Naive thymus-derived CD4-positive, alpha-beta T cell (primary cell): ENCODE measurements at regions of chr5 and their contacts with region 1.

Region 1: GRCh38 chr5:137629646-137630045 is 106.2 kb downstream of the KLHL3 start:
- DNase-seq: peak in 7 of 9 donors; percentile 26 to 61 (median 52)
- ATAC-seq: peak; percentile 82
- H3K4me3 ChIP-seq: no peak overlapping the region
- H3K4me3 Mint-ChIP-seq: no peak overlapping the region
- H3K27ac ChIP-seq: no peak overlapping the region
- H3K27ac Mint-ChIP-seq: no peak overlapping the region
- H3K4me1 ChIP-seq: no peaks in the 10 kb centered on the region
- H3K4me1 Mint-ChIP-seq: peaks cover 0 to 2% (median 0%) of the 10 kb centered on the region in 7 donors
- H3K27me3 ChIP-seq: no peaks in the 10 kb centered on the region
- H3K27me3 Mint-ChIP-seq: no peaks in the 10 kb centered on the region

Region 2: DNA sequence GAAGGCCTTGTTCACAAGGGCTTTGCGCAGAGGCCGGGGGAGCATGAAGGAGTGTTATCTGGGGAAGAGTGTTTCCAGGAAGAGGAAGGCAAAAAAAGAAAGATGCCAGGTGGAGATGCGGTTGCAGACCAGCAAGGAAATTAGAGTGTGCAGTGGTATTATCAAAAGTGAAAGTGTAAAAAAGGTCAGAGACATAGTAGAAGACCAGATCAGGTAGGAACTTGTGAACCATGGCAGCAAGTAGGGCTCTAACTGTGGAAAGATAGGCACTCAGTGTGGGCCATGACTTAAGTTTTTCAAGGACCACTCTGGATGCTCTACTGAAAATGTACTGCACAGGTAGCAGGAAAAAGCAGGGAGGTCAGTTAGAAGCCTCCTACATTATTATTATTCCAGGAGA is 40.5 kb before region 1 on chr5:
- CTCF ChIA-PET with region 1: no interaction called
- POLR2A ChIA-PET with region 1: no interaction called
- intact Hi-C with region 1: no loop called
- DNase-seq: no peak
- ATAC-seq: no peak
- H3K4me3 ChIP-seq: no peak overlapping the region
- H3K4me3 Mint-ChIP-seq: peak overlapping the region in 1 of 10 donors; percentile 24
- H3K27ac ChIP-seq: no peak overlapping the region
- H3K27ac Mint-ChIP-seq: no peak overlapping the region
- H3K4me1 ChIP-seq: no peaks in the 10 kb centered on the region
- H3K4me1 Mint-ChIP-seq: peaks cover 0 to 6% (median 4%) of the 10 kb centered on the region in 7 donors
- H3K27me3 ChIP-seq: no peaks in the 10 kb centered on the region
- H3K27me3 Mint-ChIP-seq: peaks cover 24 to 46% (median 27%) of the 10 kb centered on the region in 5 donors

Region 3: DNA sequence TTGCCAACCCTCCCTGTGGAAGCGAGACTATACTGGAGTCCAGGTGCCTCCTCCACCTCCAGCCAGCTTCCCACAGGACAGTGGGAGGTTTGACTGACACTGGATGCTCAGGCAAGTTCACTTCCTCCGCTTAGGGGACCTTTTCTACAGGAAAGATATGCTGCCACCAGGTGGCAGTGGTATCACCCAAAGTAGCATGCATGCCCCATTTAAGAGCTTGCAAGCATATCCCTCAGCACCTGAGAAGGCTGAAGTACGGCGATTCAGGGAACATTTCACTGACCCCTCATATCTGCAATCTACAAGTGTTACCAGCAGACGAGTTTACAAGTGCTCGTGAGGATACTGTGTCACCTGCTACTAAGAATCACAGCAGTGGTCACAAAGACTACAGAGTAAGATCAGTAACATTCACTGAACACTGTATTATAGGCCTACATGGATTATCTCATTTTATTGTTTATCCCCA is 30.7 kb after region 1 on chr5:
- CTCF ChIA-PET with region 1: interaction called, 19 read pairs
- POLR2A ChIA-PET with region 1: no interaction called
- intact Hi-C with region 1: loop called (anchors 1 kb)
- DNase-seq: peak; percentile 32 to 78 (median 70)
- ATAC-seq: peak; percentile 91
- H3K4me3 ChIP-seq: no peak overlapping the region
- H3K4me3 Mint-ChIP-seq: no peak overlapping the region
- H3K27ac ChIP-seq: no peak overlapping the region
- H3K27ac Mint-ChIP-seq: peak overlapping the region in 4 of 9 donors; percentile 27 to 45 (median 36)
- H3K4me1 ChIP-seq: peaks cover 0 to 4% of the 10 kb centered on the region in 2 donors
- H3K4me1 Mint-ChIP-seq: peaks cover 0 to 17% (median 14%) of the 10 kb centered on the region in 7 donors
- H3K27me3 ChIP-seq: no peaks in the 10 kb centered on the region
- H3K27me3 Mint-ChIP-seq: no peaks in the 10 kb centered on the region

Region 4: DNA sequence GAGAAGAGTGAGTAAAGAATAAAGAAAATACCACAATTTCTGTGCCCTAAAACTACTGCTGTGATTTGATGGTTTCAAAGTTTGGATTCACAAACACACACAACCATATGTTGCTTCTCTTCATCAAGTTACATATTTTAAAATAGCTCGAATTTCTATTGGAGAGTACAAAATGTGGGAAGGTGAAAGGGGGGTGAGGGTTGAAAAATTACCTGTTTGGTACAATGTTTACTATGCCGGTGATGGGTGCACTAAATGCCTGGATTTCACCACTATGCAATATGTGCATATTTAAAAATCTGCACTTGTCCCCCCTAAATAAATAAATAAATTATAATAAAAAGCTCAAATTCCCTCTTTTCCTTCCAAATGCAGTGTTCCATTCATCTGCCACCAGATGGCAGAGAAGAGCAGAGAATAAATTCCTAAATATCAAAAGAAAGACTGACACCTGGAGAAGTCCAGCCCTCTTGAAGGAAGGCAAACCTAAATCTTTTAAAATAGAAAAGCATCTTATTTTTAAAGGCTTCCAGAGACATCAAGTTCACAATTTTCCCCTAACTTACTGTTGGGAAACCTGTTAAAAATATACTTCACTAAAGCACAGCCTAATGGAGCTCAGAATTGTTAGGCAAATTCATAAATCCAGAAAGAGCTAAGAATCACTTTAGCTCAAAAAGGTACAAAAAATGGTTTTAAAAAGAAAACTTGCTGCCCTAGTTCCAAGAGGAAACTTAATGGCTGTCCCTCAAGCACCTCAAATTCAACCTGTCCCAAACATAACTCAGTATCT is 149.3 kb after region 1 on chr5:
- CTCF ChIA-PET with region 1: no interaction called
- POLR2A ChIA-PET with region 1: no interaction called
- intact Hi-C with region 1: loop called in 1 of 2 experiments (anchors 1 kb)
- DNase-seq: peak in 5 of 9 donors; percentile 11 to 29 (median 16)
- ATAC-seq: no peak
- H3K4me3 ChIP-seq: no peak overlapping the region
- H3K4me3 Mint-ChIP-seq: no peak overlapping the region
- H3K27ac ChIP-seq: no peak overlapping the region
- H3K27ac Mint-ChIP-seq: no peak overlapping the region
- H3K4me1 ChIP-seq: no peaks in the 10 kb centered on the region
- H3K4me1 Mint-ChIP-seq: no peaks in the 10 kb centered on the region
- H3K27me3 ChIP-seq: no peaks in the 10 kb centered on the region
- H3K27me3 Mint-ChIP-seq: peaks cover 0 to 12% (median 0%) of the 10 kb centered on the region in 5 donors

Region 5: DNA sequence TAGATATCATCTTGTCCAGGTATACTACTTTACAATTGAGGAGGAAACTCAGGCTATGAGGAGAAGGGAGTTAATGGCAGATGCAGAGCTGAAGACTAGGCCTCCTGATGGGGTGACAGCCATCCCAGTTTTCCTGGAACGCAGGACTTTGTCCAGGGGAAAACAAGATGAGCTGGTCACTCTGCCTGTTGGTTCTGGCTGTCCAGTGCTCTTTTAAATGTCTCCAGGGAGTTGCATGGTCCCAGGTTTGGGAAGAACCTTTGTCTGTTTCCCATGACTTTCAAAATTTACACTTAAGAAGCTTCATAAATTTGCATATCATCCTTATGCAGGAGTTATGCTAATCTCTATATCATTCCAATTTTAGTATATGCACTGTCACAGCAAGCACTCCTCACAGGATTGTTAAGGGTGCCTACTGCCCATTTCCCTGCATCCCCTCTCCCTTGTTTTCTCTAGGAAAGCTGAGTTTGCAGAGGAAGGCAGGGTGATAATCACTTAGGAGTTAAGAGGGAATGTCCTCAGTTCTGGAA is 439.5 kb after region 1 on chr5:
- CTCF ChIA-PET with region 1: interaction called, 9 read pairs
- POLR2A ChIA-PET with region 1: no interaction called
- intact Hi-C with region 1: loop called (anchors 1 kb)
- DNase-seq: no peak
- ATAC-seq: no peak
- H3K4me3 ChIP-seq: no peak overlapping the region
- H3K4me3 Mint-ChIP-seq: no peak overlapping the region
- H3K27ac ChIP-seq: no peak overlapping the region
- H3K27ac Mint-ChIP-seq: no peak overlapping the region
- H3K4me1 ChIP-seq: no peaks in the 10 kb centered on the region
- H3K4me1 Mint-ChIP-seq: peaks cover 0 to 11% (median 4%) of the 10 kb centered on the region in 7 donors
- H3K27me3 ChIP-seq: no peaks in the 10 kb centered on the region
- H3K27me3 Mint-ChIP-seq: no peaks in the 10 kb centered on the region

Region 6: GRCh38 chr5:138503487-138504270 is 874.0 kb after region 1 on chr5:
- CTCF ChIA-PET with region 1: no interaction called
- POLR2A ChIA-PET with region 1: no interaction called
- intact Hi-C with region 1: loop called in 1 of 2 experiments (anchors 2 kb)
- DNase-seq: peak in 7 of 9 donors; percentile 30 to 60 (median 49)
- ATAC-seq: peak; percentile 82
- H3K4me3 ChIP-seq: no peak overlapping the region
- H3K4me3 Mint-ChIP-seq: no peak overlapping the region
- H3K27ac ChIP-seq: no peak overlapping the region
- H3K27ac Mint-ChIP-seq: peak overlapping the region in 3 of 9 donors; percentile 9 to 47 (median 32)
- H3K4me1 ChIP-seq: no peaks in the 10 kb centered on the region
- H3K4me1 Mint-ChIP-seq: peaks cover 0 to 5% (median 3%) of the 10 kb centered on the region in 7 donors
- H3K27me3 ChIP-seq: no peaks in the 10 kb centered on the region
- H3K27me3 Mint-ChIP-seq: no peaks in the 10 kb centered on the region